ENCODE measurements at regions of chr18 and their contacts with region 1.

Region 1: GRCh38 chr18:45839414-45840395 is 14.2 kb downstream of the SIGLEC15 start:
- DNase-seq: no peak
- ATAC-seq: peak; percentile 72 to 77

Region 2: DNA sequence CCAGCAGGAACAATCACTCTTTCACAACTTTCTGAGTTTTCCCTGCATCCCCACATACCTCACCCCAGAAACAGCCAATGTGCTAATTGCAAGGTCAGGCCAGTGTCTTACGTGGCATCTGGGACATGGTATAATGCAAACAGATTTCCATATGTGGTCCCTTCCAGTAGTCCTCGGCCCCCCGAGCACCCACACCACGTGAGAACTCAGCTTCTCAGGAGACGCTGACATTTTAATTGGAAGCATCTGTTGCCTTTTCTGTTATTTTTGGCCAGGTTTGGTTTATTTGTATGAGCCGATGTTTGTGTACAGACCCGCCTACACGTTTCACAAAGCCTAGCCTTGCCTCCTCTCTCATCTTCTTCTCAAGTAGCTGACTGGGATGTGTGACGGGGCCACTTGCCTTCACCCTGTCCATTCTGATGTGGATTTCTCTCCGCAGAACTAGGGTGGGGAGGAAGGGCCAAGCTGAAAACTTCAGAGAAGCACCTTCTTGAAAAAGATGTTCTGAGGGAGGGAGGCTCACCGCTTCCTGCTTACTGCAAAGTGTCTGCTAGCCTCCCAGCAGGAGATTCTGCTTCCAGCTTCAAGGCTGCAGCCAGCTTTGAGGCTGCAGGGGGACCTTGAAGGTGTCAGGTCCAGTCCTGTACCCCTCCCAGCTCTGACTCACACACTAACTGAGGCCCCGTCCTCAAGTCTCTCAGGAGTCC is 334.1 kb before region 1 on chr18:
- intact Hi-C with region 1: no loop called
- DNase-seq: no peak
- ATAC-seq: peak in 1 of 2 donors; percentile 71

Region 3: DNA sequence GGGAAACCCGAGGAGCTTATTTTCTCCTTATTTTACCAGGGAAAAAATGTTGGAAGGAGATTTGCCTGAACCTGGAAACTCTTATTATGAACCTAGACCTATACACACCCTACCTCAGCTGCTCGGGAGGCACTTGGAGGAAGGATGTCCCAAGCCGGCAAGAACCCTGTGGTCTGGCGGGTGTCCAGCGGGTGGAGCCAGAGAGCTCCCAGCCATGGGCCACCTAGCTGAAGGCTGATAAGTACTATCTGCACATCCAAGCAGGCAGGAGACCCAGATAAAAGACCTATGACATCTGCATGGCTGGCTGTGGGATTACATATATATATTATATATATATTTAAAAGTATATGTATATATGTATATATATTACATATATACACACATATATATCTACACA is 116.8 kb before region 1 on chr18:
- intact Hi-C with region 1: loop called (anchors 2 to 10 kb)
- DNase-seq: peak; percentile 76
- ATAC-seq: peak; percentile 84 to 85

Region 4: GRCh38 chr18:45764000-45764686 is 75.6 kb before region 1 on chr18:
- intact Hi-C with region 1: no loop called
- DNase-seq: no peak
- ATAC-seq: no peak

Region 5: GRCh38 chr18:45785134-45785533 is 54.6 kb before region 1 on chr18:
- intact Hi-C with region 1: loop called in 1 of 2 experiments (anchors 2 kb)
- DNase-seq: peak; percentile 44
- ATAC-seq: peak; percentile 46 to 72